ENCODE measurements at regions of chr15 and their contacts with region 1.

Region 1: DNA sequence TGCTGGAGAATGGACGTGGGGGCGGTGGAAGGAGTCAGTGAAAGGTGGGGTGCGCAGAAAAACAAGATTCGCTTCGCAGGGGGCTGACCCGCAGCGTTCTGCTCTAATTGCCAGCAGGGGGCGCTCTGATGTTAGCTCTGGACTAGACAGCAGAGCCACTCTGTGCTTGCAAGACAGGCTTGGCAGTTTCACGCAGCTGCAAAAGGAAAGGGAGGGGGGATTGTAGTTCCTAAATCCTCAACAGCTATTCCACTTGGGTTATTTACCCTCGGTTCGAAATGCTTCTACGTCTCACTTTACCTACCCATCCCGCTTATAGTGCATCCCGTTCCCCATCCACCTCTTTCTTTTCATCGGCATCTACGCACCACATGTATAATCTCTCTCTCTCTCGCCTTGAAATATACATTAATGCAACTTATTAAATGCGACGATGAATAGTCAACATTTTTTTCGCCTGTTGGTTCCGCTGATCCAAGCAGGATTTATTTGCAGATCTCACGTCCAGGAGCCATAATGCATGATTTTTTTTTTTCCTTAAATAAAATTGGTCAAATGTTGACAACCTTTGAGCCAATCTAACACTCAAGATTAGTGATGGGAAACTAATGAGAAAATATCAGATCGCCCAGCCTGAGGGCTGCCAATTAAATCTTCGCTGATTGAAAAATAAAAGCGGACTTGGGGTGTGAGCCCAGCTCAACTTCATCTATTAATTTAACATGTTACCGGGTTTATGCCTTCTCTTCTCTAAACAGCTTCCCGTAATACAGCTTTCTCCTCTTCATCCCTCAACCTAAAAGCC is 216.4 kb downstream of the MEIS2 start:
- DNase-seq: peak; percentile 69
- ATAC-seq: peak; percentile 93
- H3K4me3 ChIP-seq: no peak overlapping the region
- H3K27ac ChIP-seq: no peak overlapping the region
- H3K4me1 ChIP-seq: peaks cover 23% of the 10 kb centered on the region
- H3K27me3 ChIP-seq: peaks cover 5 to 72% of the 10 kb centered on the region in 2 experiments
- CTCF ChIP-seq: peak; percentile 90
- EP300 ChIP-seq: no peak
- POLR2A ChIP-seq: no peak
- RAD21 ChIP-seq: peak; percentile 87

Region 2: DNA sequence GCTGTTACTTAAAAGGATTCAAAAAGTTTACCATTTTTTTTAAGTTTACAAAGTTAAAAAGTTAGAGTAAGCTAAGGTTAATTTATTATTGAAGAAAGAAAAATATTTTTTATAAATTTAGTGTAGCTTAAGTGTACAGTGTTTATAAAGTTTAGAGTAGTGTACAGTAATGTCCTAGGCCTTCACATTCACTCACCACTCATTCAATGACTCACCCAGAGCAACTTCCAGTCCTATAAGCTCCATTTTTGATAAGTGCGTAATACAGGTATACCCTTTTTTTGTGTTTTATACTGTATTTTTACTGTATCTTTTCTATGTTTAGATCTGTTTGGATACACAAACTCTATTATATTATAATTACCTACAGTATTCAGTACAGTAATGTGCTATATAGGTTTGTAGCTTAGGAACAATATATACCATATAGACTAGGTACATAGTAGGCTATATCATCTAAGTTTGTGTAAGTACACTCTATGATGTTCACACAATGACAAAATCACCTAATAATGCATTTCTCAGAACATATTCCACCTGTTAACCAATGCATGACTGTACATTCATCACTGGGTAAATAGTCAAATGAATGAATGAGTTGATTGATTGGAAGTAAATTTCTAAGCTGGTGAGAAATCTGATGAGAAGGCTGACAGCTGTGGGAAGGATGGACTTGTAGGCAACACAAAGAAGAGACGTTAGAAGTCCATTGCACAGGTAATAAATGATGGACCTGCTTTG is 399.7 kb before region 1 on chr15:
- CTCF ChIA-PET with region 1: no interaction called
- POLR2A ChIA-PET with region 1: no interaction called
- in situ Hi-C with region 1: no loop called
- intact Hi-C with region 1: no loop called
- DNase-seq: no peak
- ATAC-seq: no peak
- H3K4me3 ChIP-seq: no peak overlapping the region
- H3K27ac ChIP-seq: no peak overlapping the region
- H3K4me1 ChIP-seq: no peaks in the 10 kb centered on the region
- H3K27me3 ChIP-seq: no peaks in the 10 kb centered on the region; a peak in 1 of 5 replicates
- CTCF ChIP-seq: no peak
- EP300 ChIP-seq: no peak
- POLR2A ChIP-seq: no peak
- RAD21 ChIP-seq: no peak

Region 3: DNA sequence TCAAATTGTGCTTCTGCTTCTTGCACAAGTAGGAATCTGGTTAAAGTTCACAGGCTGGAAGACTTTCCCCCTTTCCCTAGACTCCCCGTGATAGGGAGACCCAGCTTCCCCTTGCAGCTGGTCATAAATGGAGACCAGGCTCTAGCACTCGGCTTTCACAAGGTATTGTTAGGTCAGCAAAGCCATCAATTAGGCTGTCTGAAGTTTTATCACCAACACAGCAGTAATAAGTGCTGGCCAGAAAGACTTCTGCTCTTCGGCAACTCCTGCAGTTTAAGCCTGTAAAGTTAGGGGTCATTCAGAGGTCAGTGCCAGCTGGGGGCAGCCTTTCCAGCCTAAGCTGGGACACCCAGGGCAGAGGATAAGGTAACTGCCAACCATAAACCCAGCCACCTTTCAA is 13.0 kb after region 1 on chr15:
- CTCF ChIA-PET with region 1: no interaction called
- POLR2A ChIA-PET with region 1: no interaction called
- in situ Hi-C with region 1: no loop called
- intact Hi-C with region 1: no loop called
- DNase-seq: no peak
- ATAC-seq: no peak
- H3K4me3 ChIP-seq: no peak overlapping the region
- H3K27ac ChIP-seq: no peak overlapping the region
- H3K4me1 ChIP-seq: peaks cover 13% of the 10 kb centered on the region
- H3K27me3 ChIP-seq: no peaks in the 10 kb centered on the region
- CTCF ChIP-seq: no peak
- EP300 ChIP-seq: no peak
- POLR2A ChIP-seq: no peak
- RAD21 ChIP-seq: no peak

Region 4: GRCh38 chr15:36996538-36997181 is 112.7 kb after region 1 on chr15:
- CTCF ChIA-PET with region 1: no interaction called
- POLR2A ChIA-PET with region 1: no interaction called
- in situ Hi-C with region 1: no loop called
- intact Hi-C with region 1: no loop called
- DNase-seq: no peak
- ATAC-seq: no peak
- H3K4me3 ChIP-seq: no peak overlapping the region
- H3K27ac ChIP-seq: no peak overlapping the region
- H3K4me1 ChIP-seq: no peaks in the 10 kb centered on the region
- H3K27me3 ChIP-seq: no peaks in the 10 kb centered on the region
- CTCF ChIP-seq: no peak
- EP300 ChIP-seq: no peak
- POLR2A ChIP-seq: no peak
- RAD21 ChIP-seq: no peak

Region 5: GRCh38 chr15:37106490-37107001 is 222.6 kb after region 1 on chr15:
- CTCF ChIA-PET with region 1: interaction called, 26 read pairs
- POLR2A ChIA-PET with region 1: no interaction called
- in situ Hi-C with region 1: loop called (anchors 5 kb)
- intact Hi-C with region 1: loop called (anchors 1 kb)
- DNase-seq: no peak
- ATAC-seq: no peak
- H3K4me3 ChIP-seq: no peak overlapping the region
- H3K27ac ChIP-seq: no peak overlapping the region
- H3K4me1 ChIP-seq: peaks cover 30% of the 10 kb centered on the region
- H3K27me3 ChIP-seq: peaks cover 0 to 21% of the 10 kb centered on the region in 2 experiments; a peak in 2 of 5 replicates
- CTCF ChIP-seq: peak; percentile 56
- EP300 ChIP-seq: no peak
- POLR2A ChIP-seq: no peak
- RAD21 ChIP-seq: peak; percentile 45; the same call in 1 of the 2 replicates

Region 6: DNA sequence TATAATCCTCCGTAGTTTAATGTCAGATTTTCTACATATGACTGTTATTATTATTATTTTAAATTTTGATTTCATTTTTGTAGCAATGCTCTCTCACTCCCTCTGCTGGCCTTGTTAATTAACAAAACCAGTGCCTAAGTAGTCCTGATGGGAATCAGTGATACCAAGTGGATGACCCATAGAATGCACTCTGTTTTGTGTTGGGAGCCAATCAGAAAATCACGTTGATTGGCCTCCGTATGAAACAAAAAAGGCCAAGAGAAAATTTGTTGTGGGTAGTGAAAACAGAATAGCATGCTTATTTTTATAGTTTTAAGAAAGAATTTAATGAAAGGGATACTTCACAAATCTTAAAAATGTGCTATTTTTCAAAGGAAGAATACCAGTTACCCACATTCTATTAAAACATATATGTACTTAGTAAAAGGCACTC is 250.8 kb after region 1 on chr15:
- CTCF ChIA-PET with region 1: interaction called, 42 read pairs
- POLR2A ChIA-PET with region 1: no interaction called
- in situ Hi-C with region 1: no loop called
- intact Hi-C with region 1: loop called (anchors 1 kb)
- DNase-seq: peak; percentile 34
- ATAC-seq: peak; percentile 84
- H3K4me3 ChIP-seq: no peak overlapping the region
- H3K27ac ChIP-seq: no peak overlapping the region
- H3K4me1 ChIP-seq: no peaks in the 10 kb centered on the region
- H3K27me3 ChIP-seq: no peaks in the 10 kb centered on the region
- CTCF ChIP-seq: peak; percentile 49
- EP300 ChIP-seq: no peak
- POLR2A ChIP-seq: no peak
- RAD21 ChIP-seq: no peak

Region 7: GRCh38 chr15:37880009-37880834 is 996.3 kb after region 1 on chr15:
- CTCF ChIA-PET with region 1: no interaction called
- POLR2A ChIA-PET with region 1: no interaction called
- in situ Hi-C with region 1: loop called (anchors 25 kb)
- intact Hi-C with region 1: loop called (anchors 2 kb)
- DNase-seq: peak; percentile 7
- ATAC-seq: peak; percentile 52
- H3K4me3 ChIP-seq: no peak overlapping the region
- H3K27ac ChIP-seq: no peak overlapping the region
- H3K4me1 ChIP-seq: no peaks in the 10 kb centered on the region
- H3K27me3 ChIP-seq: no peaks in the 10 kb centered on the region
- CTCF ChIP-seq: peak; percentile 66
- EP300 ChIP-seq: no peak
- POLR2A ChIP-seq: no peak
- RAD21 ChIP-seq: no peak

Region 8: DNA sequence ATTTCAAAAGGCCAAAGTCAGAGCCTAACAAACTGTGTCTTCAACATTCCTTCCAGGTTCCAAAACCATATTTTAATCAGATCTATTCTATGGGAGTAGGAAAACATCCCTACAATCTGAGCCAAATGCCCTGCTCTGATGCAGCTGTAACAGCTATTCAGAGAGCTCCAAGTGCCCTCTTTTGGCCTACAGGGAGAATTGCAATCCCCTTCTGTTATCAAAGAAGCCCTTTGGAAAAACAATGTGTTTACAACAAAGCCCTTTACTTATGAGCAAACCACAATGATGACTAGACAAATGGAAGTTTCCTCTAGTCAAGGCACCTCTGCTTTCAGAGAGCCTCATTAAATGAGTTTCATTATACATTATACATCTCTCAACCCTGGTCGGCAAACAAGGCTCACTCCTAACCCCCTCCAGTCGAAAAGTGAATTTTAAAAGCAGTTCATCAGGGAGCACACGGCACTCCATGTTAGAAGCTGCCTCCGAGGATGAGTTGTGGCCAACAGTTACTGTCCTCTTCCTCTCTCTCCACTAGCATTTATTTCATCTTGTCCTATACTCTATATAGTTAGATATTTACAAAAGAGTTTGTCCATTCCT is 1008.0 kb after region 1 on chr15:
- CTCF ChIA-PET with region 1: no interaction called
- POLR2A ChIA-PET with region 1: no interaction called
- in situ Hi-C with region 1: loop called (anchors 25 kb)
- intact Hi-C with region 1: no loop called
- DNase-seq: peak; percentile 23
- ATAC-seq: peak; percentile 76
- H3K4me3 ChIP-seq: no peak overlapping the region
- H3K27ac ChIP-seq: no peak overlapping the region
- H3K4me1 ChIP-seq: no peaks in the 10 kb centered on the region
- H3K27me3 ChIP-seq: peaks cover 0 to 3% of the 10 kb centered on the region in 2 experiments; a peak in 1 of 5 replicates
- CTCF ChIP-seq: peak; percentile 66
- EP300 ChIP-seq: no peak
- POLR2A ChIP-seq: no peak
- RAD21 ChIP-seq: 0 out of 2 replicates have a peak, but pooled peaks have one; percentile 14

Measured in HepG2 (cell line).